CD8-positive, alpha-beta memory T cell (primary cell): ENCODE measurements at regions of chr19 and their contacts with region 1.

Region 1: GRCh38 chr19:13195678-13196077 is 45.5 kb downstream of the IER2 start:
- DNase-seq: peak; percentile 33 to 71 (median 39)
- H3K4me3 ChIP-seq: no peak overlapping the region
- H3K4me3 Mint-ChIP-seq: peak overlapping the region in 2 of 7 donors; percentile 47 to 70
- H3K27ac ChIP-seq: no peak overlapping the region
- H3K27ac Mint-ChIP-seq: peak overlapping the region in 6 of 8 donors; percentile 37 to 87 (median 66)
- H3K4me1 ChIP-seq: peaks cover 35% of the 10 kb centered on the region
- H3K4me1 Mint-ChIP-seq: peaks cover 22 to 26% (median 25%) of the 10 kb centered on the region in 3 donors
- H3K27me3 ChIP-seq: no peaks in the 10 kb centered on the region
- H3K27me3 Mint-ChIP-seq: no peaks in the 10 kb centered on the region

Region 2: GRCh38 chr19:13069415-13070359 is 126.0 kb before region 1 on chr19:
- CTCF ChIA-PET with region 1: no interaction called
- POLR2A ChIA-PET with region 1: no interaction called
- DNase-seq: no peak
- H3K4me3 ChIP-seq: no peak overlapping the region
- H3K4me3 Mint-ChIP-seq: no peak overlapping the region
- H3K27ac ChIP-seq: peak overlapping the region; percentile 69
- H3K27ac Mint-ChIP-seq: no peak overlapping the region
- H3K4me1 ChIP-seq: no peaks in the 10 kb centered on the region
- H3K4me1 Mint-ChIP-seq: no peaks in the 10 kb centered on the region
- H3K27me3 ChIP-seq: no peaks in the 10 kb centered on the region
- H3K27me3 Mint-ChIP-seq: peaks cover 5 to 6% of the 10 kb centered on the region in 2 donors

Region 3: DNA sequence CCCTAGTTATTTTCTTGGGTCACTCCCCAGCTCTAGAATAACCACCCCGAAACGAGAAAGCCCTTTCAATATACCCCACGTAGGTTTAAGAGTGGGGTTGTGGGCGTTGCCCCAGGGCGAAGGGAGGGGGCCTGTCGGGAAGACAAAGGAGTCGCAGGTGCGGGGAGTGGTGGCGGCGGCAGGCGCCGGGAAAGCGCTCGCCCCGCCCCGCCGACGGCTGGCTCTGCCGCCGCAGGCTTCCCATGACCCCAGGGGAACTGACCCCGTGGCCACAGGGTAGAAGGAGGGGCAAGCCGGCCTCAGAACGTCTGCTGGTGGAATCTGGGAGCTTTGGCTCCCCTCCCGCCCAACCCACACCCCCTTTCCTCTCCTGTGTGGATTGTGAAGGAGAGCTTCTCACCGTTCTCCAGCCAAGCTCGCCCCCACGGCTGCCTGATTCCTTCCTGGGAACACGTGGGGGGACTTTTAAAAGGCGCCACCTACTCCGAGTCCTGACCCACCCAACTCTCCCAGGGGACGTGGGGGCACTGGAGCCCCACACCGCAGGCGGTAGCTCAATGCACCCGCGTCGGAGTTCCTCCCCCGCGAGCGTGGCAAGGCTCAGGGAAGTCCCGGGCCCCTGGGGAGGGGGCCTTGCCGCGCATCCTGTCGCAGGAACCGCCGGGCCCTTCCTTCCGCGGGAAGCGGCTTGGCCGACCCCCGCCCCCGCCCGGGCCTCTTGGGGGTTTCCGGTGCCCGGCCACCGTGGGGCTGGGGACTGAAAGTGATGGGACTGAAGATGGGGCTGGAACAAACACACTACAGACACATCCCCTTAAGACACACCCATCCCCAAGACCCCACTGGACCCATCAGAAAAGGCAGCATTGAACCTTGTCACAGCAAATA is 40.0 kb before region 1 on chr19:
- CTCF ChIA-PET with region 1: interaction called, 55 read pairs
- POLR2A ChIA-PET with region 1: interaction called, 10 read pairs
- DNase-seq: peak; percentile 66 to 87 (median 82)
- H3K4me3 ChIP-seq: peak overlapping the region; percentile 76
- H3K4me3 Mint-ChIP-seq: peak overlapping the region; percentile 94 to 100 (median 99)
- H3K27ac ChIP-seq: peak overlapping the region; percentile 99
- H3K27ac Mint-ChIP-seq: peak overlapping the region; percentile 97 to 99 (median 98)
- H3K4me1 ChIP-seq: peaks cover 40% of the 10 kb centered on the region
- H3K4me1 Mint-ChIP-seq: peaks cover 36 to 62% (median 50%) of the 10 kb centered on the region in 3 donors
- H3K27me3 ChIP-seq: no peaks in the 10 kb centered on the region
- H3K27me3 Mint-ChIP-seq: peaks cover 0 to 22% of the 10 kb centered on the region in 2 donors

Region 4: DNA sequence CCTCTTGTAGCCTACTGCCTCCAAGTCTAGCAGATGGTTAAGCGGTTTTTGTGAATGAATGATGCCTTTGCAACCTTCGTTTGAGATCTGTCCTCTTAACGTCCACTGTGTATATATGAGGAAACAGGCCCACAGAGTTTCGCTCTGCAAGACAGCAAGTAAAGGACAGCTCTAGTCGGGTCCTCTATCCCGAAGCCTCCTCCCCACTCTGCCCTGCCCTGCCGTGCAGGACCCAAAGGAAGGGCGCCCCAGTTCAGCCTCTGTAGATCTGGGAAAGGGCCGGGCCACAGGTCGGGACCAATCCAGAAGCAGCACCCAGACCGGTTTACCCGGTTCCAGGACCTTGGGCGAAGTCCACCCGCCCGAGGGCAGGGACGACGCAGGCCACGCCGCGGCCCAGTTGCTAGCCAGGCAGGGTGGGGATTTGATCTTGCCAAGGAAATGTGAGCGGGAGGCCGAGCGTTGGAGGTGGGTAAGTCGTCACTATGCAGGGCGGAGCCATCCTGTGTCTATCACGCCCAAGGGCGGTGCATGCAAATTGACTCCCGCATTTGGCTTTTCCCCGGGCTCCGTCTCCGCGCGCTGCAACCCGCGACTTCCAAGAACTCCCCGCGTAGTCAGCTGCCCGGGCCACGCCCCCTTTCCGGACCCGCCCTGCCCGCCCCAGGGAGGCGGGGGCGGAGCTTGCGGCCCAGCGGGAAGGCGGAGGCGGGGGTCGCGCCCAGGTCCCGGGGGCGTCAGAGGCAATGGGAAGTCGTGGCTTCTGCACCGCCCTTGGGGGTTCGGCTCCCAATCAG is 33.0 kb before region 1 on chr19:
- CTCF ChIA-PET with region 1: interaction called, 55 read pairs
- POLR2A ChIA-PET with region 1: interaction called, 11 read pairs
- DNase-seq: peak; percentile 74 to 87 (median 79)
- H3K4me3 ChIP-seq: peak overlapping the region; percentile 82
- H3K4me3 Mint-ChIP-seq: peak overlapping the region; percentile 85 to 91 (median 89)
- H3K27ac ChIP-seq: peak overlapping the region; percentile 92
- H3K27ac Mint-ChIP-seq: peak overlapping the region; percentile 94 to 99 (median 97)
- H3K4me1 ChIP-seq: peaks cover 84% of the 10 kb centered on the region
- H3K4me1 Mint-ChIP-seq: peaks cover 53 to 87% (median 82%) of the 10 kb centered on the region in 3 donors
- H3K27me3 ChIP-seq: no peaks in the 10 kb centered on the region
- H3K27me3 Mint-ChIP-seq: peaks cover 0 to 6% of the 10 kb centered on the region in 2 donors

Region 5: DNA sequence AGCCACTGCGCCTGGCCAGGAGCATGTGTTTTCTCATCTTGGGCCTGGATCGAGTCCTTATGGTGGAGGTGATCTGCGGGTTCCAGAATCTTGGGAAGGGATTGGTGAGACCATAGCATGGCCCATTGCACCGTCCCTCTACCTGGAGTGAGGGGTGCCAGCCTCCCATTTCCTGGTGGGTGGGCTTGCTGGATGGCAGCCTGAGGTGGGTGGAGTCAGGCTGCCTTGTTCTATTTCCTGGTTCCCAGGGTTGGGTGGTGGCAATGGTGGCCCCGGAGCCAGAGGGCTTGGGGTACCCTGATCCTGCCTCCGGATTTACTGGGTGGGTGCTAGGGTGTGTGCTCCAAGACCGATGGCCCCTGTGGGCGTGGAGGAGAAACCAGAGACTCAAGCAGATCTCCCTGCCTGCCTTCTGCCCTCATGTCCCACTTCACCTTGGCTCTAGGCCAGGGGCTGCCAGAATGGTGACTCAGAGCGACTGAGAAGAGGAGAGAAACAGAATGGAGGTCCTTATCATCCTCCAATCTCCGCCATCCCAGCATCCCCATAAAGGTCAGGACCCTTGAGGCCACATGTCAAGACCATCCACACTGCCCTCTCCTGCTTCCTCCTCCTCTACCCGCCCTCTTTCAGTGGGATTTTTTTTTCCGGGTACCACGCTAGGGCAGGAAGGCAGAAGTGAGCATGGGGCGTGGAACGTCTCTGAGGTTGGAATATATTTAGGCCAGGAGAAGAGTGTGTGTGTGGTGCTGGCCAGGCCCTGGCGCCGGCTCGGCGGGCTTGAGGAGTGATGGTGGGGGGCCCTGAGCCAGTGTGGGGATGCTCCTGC is 23.4 kb before region 1 on chr19:
- CTCF ChIA-PET with region 1: interaction called, 44 read pairs
- POLR2A ChIA-PET with region 1: interaction called, 5 read pairs
- DNase-seq: peak; percentile 64 to 91 (median 68)
- H3K4me3 ChIP-seq: peak overlapping the region; percentile 51
- H3K4me3 Mint-ChIP-seq: peak overlapping the region; percentile 82 to 92 (median 87)
- H3K27ac ChIP-seq: peak overlapping the region; percentile 39
- H3K27ac Mint-ChIP-seq: peak overlapping the region; percentile 95 to 98 (median 97)
- H3K4me1 ChIP-seq: peaks cover 66% of the 10 kb centered on the region
- H3K4me1 Mint-ChIP-seq: peaks cover 51 to 70% (median 57%) of the 10 kb centered on the region in 3 donors
- H3K27me3 ChIP-seq: no peaks in the 10 kb centered on the region
- H3K27me3 Mint-ChIP-seq: no peaks in the 10 kb centered on the region

Region 6: DNA sequence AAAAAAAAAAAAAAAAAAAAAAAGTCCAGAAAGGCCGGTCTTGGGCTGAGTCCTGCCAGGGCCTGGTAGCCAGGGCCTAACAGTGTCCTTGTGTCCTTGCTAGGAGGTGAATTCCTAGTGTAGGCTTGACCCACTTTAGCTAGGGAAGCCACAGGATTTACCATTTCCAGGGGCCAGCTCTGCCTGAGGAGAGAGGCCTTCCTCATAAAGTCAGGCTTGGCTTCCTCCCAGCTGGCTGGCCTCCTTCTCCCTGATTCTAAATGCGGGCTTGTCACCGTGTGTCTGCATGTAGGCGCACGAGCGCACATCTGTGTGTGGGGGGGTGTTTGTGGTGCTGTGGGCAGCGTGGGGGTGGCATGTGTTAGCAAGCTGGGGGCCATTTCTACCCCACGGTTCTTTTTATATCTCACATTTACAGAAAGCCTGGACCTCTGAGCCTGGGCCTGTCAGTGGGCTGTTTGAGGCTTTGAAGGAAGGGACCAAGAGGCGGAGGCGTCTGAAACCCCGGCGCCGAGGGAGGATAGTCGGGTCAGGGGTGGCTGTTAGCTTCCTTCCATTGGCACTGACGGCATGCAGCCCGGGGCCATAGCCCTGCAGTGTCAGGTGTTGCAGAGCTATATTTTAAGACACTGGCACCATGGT is 13.8 kb before region 1 on chr19:
- CTCF ChIA-PET with region 1: interaction called, 37 read pairs
- POLR2A ChIA-PET with region 1: interaction called, 4 read pairs
- DNase-seq: peak; percentile 19 to 70 (median 35)
- H3K4me3 ChIP-seq: peak overlapping the region; percentile 41
- H3K4me3 Mint-ChIP-seq: peak overlapping the region in 6 of 7 donors; percentile 68 to 89 (median 71)
- H3K27ac ChIP-seq: no peak overlapping the region
- H3K27ac Mint-ChIP-seq: peak overlapping the region; percentile 83 to 97 (median 90)
- H3K4me1 ChIP-seq: peaks cover 26% of the 10 kb centered on the region
- H3K4me1 Mint-ChIP-seq: peaks cover 22 to 41% (median 23%) of the 10 kb centered on the region in 3 donors
- H3K27me3 ChIP-seq: no peaks in the 10 kb centered on the region
- H3K27me3 Mint-ChIP-seq: no peaks in the 10 kb centered on the region

Region 7: DNA sequence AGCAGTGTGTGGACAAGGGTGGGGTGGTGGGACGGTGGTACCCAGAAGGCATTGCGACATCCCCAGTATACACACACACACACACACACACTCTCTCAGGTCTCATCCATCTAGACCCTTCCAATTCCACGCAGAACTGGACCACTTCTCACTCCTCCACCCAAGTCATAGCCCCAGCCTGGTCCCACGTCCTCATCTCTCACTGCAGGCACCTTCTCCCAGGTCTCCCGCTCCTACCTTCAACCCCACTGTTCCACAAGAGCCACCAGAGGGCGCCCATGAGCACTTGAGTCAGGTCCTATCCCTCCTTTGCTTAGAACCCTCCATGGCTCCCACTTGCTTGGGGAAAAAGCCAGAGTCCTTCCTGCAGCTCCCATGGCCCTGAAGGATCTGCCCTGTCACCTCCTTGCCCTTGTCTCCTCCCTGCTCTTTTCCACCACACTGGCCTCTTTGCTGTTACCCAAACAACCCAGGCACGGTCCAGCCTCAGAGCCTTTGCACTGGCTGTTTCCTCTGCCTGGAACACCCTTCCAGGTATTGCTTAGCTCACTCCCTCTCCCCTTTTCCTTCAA is 17.2 kb after region 1 on chr19:
- CTCF ChIA-PET with region 1: interaction called, 30 read pairs
- POLR2A ChIA-PET with region 1: no interaction called
- DNase-seq: peak; percentile 55 to 83 (median 58)
- H3K4me3 ChIP-seq: no peak overlapping the region
- H3K4me3 Mint-ChIP-seq: peak overlapping the region in 4 of 7 donors; percentile 20 to 87 (median 48)
- H3K27ac ChIP-seq: no peak overlapping the region
- H3K27ac Mint-ChIP-seq: peak overlapping the region in 3 of 8 donors; percentile 0 to 91 (median 90)
- H3K4me1 ChIP-seq: no peaks in the 10 kb centered on the region
- H3K4me1 Mint-ChIP-seq: peaks cover 20 to 38% (median 25%) of the 10 kb centered on the region in 3 donors
- H3K27me3 ChIP-seq: no peaks in the 10 kb centered on the region
- H3K27me3 Mint-ChIP-seq: no peaks in the 10 kb centered on the region

Region 8: GRCh38 chr19:13262450-13262849 is 66.8 kb after region 1 on chr19:
- CTCF ChIA-PET with region 1: interaction called, 23 read pairs
- POLR2A ChIA-PET with region 1: interaction called, 7 read pairs
- DNase-seq: peak in 2 of 5 donors; percentile 36 to 38
- H3K4me3 ChIP-seq: no peak overlapping the region
- H3K4me3 Mint-ChIP-seq: no peak overlapping the region
- H3K27ac ChIP-seq: no peak overlapping the region
- H3K27ac Mint-ChIP-seq: no peak overlapping the region
- H3K4me1 ChIP-seq: no peaks in the 10 kb centered on the region
- H3K4me1 Mint-ChIP-seq: peaks cover 0 to 3% (median 0%) of the 10 kb centered on the region in 3 donors
- H3K27me3 ChIP-seq: no peaks in the 10 kb centered on the region
- H3K27me3 Mint-ChIP-seq: peaks cover 4 to 20% of the 10 kb centered on the region in 2 donors

Region 9: GRCh38 chr19:13275016-13275722 is 79.5 kb after region 1 on chr19:
- CTCF ChIA-PET with region 1: no interaction called
- POLR2A ChIA-PET with region 1: no interaction called
- DNase-seq: no peak
- H3K4me3 ChIP-seq: no peak overlapping the region
- H3K4me3 Mint-ChIP-seq: no peak overlapping the region
- H3K27ac ChIP-seq: no peak overlapping the region
- H3K27ac Mint-ChIP-seq: peak overlapping the region in 1 of 8 donors; percentile 29
- H3K4me1 ChIP-seq: peaks cover 9% of the 10 kb centered on the region
- H3K4me1 Mint-ChIP-seq: peaks cover 16 to 27% (median 24%) of the 10 kb centered on the region in 3 donors
- H3K27me3 ChIP-seq: no peaks in the 10 kb centered on the region
- H3K27me3 Mint-ChIP-seq: peaks cover 2 to 8% of the 10 kb centered on the region in 2 donors